ENCODE measurements at regions of chr20 and their contacts with region 1.

Region 1: DNA sequence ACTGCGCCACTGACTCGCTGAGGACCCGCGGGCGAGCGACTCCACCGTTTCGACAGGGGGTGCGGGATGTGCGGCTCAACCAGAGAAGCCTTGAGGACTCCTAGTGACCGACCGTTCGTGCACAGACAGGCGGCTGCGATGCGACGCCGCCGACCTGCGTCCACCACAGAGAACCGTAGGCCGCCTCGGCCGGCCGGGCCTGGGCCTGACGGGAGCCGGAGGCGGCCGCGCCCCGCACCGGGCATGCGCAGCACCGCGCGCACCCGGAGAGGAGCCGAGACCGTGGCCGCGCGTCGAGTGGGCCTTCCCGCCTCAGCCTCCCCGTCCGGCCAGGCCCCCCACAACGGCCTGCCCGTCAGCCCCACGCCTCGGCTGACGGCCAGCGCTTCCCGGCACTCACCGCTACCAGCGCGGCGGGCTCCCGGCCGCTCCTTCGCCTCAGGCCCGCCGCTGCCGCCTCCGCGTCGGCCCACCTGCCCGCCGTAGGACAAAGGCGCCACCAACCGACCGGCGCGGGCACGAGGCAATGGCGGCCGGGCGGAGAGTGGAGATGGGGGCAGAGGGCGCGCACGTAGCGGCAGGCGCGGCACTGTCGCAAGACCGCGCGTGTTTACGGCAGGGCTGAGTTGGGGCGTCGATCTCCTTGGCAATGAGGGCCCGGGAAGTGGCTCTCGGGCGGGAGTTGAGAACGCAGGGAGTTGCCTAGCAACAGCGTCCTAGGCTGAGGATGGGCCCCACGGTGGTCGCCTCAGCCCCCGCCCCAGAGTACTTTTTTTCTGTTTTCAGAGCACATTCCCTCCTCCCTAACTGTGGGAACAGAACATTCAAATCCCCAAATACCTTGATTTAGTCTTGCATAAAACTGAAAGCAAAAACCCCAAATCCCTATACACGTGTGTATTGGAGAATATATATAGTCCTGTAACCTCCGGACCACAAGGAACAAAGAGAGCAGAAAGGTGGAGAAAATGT is at the start of gene NCOA5:
- DNase-seq: peak; percentile 90 to 95 (median 94)
- ATAC-seq: peak; percentile 98
- H3K4me3 ChIP-seq: peak within 1 kb of the TSS; percentile 73
- H3K4me3 Mint-ChIP-seq: peak within 1 kb of the TSS; percentile 86 to 95 (median 90)
- H3K27ac ChIP-seq: peak within 1 kb of the TSS; percentile 89
- H3K27ac Mint-ChIP-seq: peak within 1 kb of the TSS; percentile 86 to 95 (median 90)
- H3K4me1 ChIP-seq: peaks cover 24 to 36% of the 10 kb centered on the region in 2 donors
- H3K4me1 Mint-ChIP-seq: peaks cover 29 to 53% (median 51%) of the 10 kb centered on the region in 7 donors
- H3K27me3 ChIP-seq: no peaks in the 10 kb centered on the region
- H3K27me3 Mint-ChIP-seq: no peaks in the 10 kb centered on the region
- total RNA-seq, gene NCOA5: 15.7 to 43.8 (median 39.4) TPM

Region 2: DNA sequence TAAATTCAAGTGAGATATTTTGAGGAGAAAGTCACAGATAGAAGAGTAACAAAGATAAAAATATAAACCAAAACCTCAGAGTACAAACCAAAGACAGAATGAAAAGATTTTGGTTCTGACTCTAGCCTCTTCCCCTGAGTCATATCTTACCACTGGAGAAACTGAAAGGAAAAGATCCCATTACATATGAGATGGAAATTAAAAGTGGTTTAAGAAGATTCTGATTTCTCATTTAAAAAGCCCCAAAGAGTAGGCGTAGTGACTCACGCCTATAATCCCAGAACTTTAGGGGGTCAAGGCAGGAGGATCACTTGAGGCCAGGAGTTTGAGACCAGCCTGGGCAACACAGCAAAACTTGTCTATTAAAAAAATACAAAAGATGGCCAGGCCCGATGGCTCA is 337.0 kb before region 1 on chr20:
- CTCF ChIA-PET with region 1: no interaction called
- POLR2A ChIA-PET with region 1: no interaction called
- intact Hi-C with region 1: no loop called
- DNase-seq: peak in 1 of 9 donors; percentile 28
- ATAC-seq: no peak
- H3K4me3 ChIP-seq: no peak overlapping the region
- H3K4me3 Mint-ChIP-seq: no peak overlapping the region
- H3K27ac ChIP-seq: no peak overlapping the region
- H3K27ac Mint-ChIP-seq: no peak overlapping the region
- H3K4me1 ChIP-seq: no peaks in the 10 kb centered on the region
- H3K4me1 Mint-ChIP-seq: peaks cover 0 to 6% (median 0%) of the 10 kb centered on the region in 7 donors
- H3K27me3 ChIP-seq: no peaks in the 10 kb centered on the region
- H3K27me3 Mint-ChIP-seq: peaks cover 5 to 30% (median 21%) of the 10 kb centered on the region in 5 donors

Region 3: GRCh38 chr20:45792332-45792686 is 297.4 kb before region 1 on chr20:
- CTCF ChIA-PET with region 1: no interaction called
- POLR2A ChIA-PET with region 1: no interaction called
- intact Hi-C with region 1: loop called (anchors 1 to 5 kb)
- DNase-seq: peak in 1 of 9 donors; percentile 9
- ATAC-seq: peak; percentile 39
- H3K4me3 ChIP-seq: peak overlapping the region; percentile 70
- H3K4me3 Mint-ChIP-seq: peak overlapping the region; percentile 85 to 99 (median 92)
- H3K27ac ChIP-seq: peak overlapping the region; percentile 96
- H3K27ac Mint-ChIP-seq: peak overlapping the region; percentile 87 to 99 (median 93)
- H3K4me1 ChIP-seq: peaks cover 5 to 10% of the 10 kb centered on the region in 2 donors
- H3K4me1 Mint-ChIP-seq: peaks cover 13 to 28% (median 20%) of the 10 kb centered on the region in 7 donors
- H3K27me3 ChIP-seq: no peaks in the 10 kb centered on the region
- H3K27me3 Mint-ChIP-seq: peaks cover 0 to 5% (median 0%) of the 10 kb centered on the region in 5 donors

Region 4: GRCh38 chr20:45880988-45881788 is 208.5 kb before region 1 on chr20 and contains the start of gene ZSWIM1:
- CTCF ChIA-PET with region 1: no interaction called
- POLR2A ChIA-PET with region 1: no interaction called
- intact Hi-C with region 1: loop called in 1 of 2 experiments (anchors 1 kb)
- DNase-seq: peak; percentile 88 to 99 (median 98)
- ATAC-seq: peak; percentile 99
- H3K4me3 ChIP-seq: peak within 1 kb of the TSS; percentile 75
- H3K4me3 Mint-ChIP-seq: peak within 1 kb of the TSS; percentile 83 to 95 (median 92)
- H3K27ac ChIP-seq: peak within 1 kb of the TSS; percentile 95
- H3K27ac Mint-ChIP-seq: peak within 1 kb of the TSS; percentile 91 to 95 (median 93)
- H3K4me1 ChIP-seq: peaks cover 9 to 18% of the 10 kb centered on the region in 2 donors
- H3K4me1 Mint-ChIP-seq: peaks cover 26 to 43% (median 38%) of the 10 kb centered on the region in 7 donors
- H3K27me3 ChIP-seq: no peaks in the 10 kb centered on the region
- H3K27me3 Mint-ChIP-seq: no peaks in the 10 kb centered on the region
- total RNA-seq, gene ZSWIM1: 8.2 to 16.0 (median 9.8) TPM

Region 5: GRCh38 chr20:46022411-46023147 is 67.1 kb before region 1 on chr20:
- CTCF ChIA-PET with region 1: no interaction called
- POLR2A ChIA-PET with region 1: no interaction called
- intact Hi-C with region 1: loop called (anchors 1 to 2 kb)
- DNase-seq: peak; percentile 47 to 81 (median 69)
- ATAC-seq: peak; percentile 66
- H3K4me3 ChIP-seq: peak overlapping the region; percentile 25
- H3K4me3 Mint-ChIP-seq: peak overlapping the region; percentile 46 to 85 (median 76)
- H3K27ac ChIP-seq: no peak overlapping the region
- H3K27ac Mint-ChIP-seq: no peak overlapping the region
- H3K4me1 ChIP-seq: peaks cover 0 to 6% of the 10 kb centered on the region in 2 donors
- H3K4me1 Mint-ChIP-seq: peaks cover 12 to 25% (median 17%) of the 10 kb centered on the region in 7 donors
- H3K27me3 ChIP-seq: peaks cover 7 to 15% of the 10 kb centered on the region in 2 donors
- H3K27me3 Mint-ChIP-seq: peaks cover 42 to 63% (median 47%) of the 10 kb centered on the region in 5 donors

Region 6: GRCh38 chr20:46073443-46073842 is 16.3 kb before region 1 on chr20:
- CTCF ChIA-PET with region 1: no interaction called
- POLR2A ChIA-PET with region 1: no interaction called
- intact Hi-C with region 1: no loop called
- DNase-seq: no peak
- ATAC-seq: no peak
- H3K4me3 ChIP-seq: no peak overlapping the region
- H3K4me3 Mint-ChIP-seq: no peak overlapping the region
- H3K27ac ChIP-seq: no peak overlapping the region
- H3K27ac Mint-ChIP-seq: no peak overlapping the region
- H3K4me1 ChIP-seq: no peaks in the 10 kb centered on the region
- H3K4me1 Mint-ChIP-seq: peaks cover 5 to 17% (median 11%) of the 10 kb centered on the region in 7 donors
- H3K27me3 ChIP-seq: no peaks in the 10 kb centered on the region
- H3K27me3 Mint-ChIP-seq: no peaks in the 10 kb centered on the region

Region 7: DNA sequence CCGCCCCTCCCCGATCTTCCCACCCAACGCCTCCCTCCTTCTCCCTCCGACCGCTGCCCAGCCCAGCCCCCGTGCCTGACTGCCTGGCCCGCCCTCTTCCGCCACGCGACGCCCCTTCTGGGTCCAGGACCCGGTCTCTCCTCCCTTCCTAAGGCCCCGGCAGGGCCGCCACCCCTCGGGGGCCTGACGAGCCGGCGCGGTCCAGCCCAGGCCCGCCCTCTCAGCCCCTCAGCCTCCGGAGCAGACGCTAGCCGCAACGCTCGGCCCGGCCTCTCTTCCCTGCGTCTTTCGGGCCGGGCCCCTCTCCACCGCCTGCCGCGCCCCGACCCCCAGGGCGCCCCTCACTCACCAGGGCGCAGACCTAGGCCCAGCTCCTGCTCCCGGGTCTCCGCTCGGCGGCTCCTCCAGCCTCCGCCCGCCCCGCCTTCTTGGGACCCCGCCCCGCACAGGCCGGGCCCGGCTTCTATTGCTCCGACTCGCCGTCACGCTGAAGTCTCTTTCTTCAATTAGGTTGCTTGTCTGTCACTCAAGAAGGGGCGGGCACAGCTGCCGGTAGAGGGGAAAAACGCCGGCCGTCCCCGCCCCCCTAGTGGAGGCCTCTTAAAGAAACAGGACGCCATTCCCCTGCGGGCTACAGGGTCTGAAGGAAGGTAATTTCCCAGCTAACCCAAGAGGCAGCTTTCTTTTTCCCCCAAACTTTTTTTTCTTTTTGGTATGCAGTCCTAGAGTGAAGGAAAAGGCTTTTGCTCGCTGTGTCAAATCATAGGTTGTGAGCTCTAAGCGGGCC is 316.7 kb after region 1 on chr20 and contains the start of gene ELMO2:
- CTCF ChIA-PET with region 1: no interaction called
- POLR2A ChIA-PET with region 1: no interaction called
- intact Hi-C with region 1: loop called in 1 of 2 experiments (anchors 1 kb)
- DNase-seq: peak; percentile 81 to 97 (median 94)
- ATAC-seq: peak; percentile 95
- H3K4me3 ChIP-seq: peak within 1 kb of the TSS; percentile 86
- H3K4me3 Mint-ChIP-seq: peak within 1 kb of the TSS; percentile 88 to 97 (median 95)
- H3K27ac ChIP-seq: peak within 1 kb of the TSS; percentile 97
- H3K27ac Mint-ChIP-seq: peak within 1 kb of the TSS; percentile 88 to 97 (median 93)
- H3K4me1 ChIP-seq: peaks cover 38 to 50% of the 10 kb centered on the region in 2 donors
- H3K4me1 Mint-ChIP-seq: peaks cover 44 to 78% (median 70%) of the 10 kb centered on the region in 7 donors
- H3K27me3 ChIP-seq: no peaks in the 10 kb centered on the region
- H3K27me3 Mint-ChIP-seq: peaks cover 0 to 3% (median 0%) of the 10 kb centered on the region in 5 donors
- total RNA-seq, gene ELMO2: 50.8 to 104 (median 52.3) TPM